HCT116 (cell line): ENCODE measurements at regions of chr17 and their contacts with region 1.

Region 1: DNA sequence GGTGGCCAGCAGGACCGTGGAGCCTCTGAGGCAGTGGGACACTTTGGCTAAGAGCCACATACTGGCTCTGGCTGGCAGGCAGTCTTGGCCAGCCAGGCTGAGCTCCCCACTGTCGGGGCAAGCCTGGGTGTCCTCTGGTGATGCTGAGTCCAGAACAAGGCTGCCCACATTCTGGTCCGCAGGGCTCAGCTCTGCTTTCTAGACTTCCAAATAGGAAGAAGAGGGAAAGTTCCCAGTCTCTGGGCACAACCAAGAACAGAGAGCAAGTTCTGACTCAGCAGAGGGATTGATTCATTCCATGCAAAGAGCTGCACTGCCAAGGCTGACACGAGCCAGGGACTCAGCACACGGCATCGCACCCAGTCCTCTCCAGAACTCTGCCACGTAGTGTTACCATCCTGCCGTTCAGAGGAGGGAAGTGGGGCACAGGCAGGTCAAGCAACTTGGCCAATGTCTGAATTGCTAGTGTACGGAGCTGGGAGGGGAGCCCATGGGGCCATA is 58.9 kb downstream of the NOS2 start:
- DNase-seq: no peak
- ATAC-seq: no peak
- H3K4me3 ChIP-seq: no peak overlapping the region
- H3K27ac ChIP-seq: no peak overlapping the region
- H3K4me1 ChIP-seq: no peaks in the 10 kb centered on the region
- H3K27me3 ChIP-seq: no peaks in the 10 kb centered on the region
- CTCF ChIP-seq: no peak
- POLR2A ChIP-seq: no peak
- RAD21 ChIP-seq: no peak

Region 2: DNA sequence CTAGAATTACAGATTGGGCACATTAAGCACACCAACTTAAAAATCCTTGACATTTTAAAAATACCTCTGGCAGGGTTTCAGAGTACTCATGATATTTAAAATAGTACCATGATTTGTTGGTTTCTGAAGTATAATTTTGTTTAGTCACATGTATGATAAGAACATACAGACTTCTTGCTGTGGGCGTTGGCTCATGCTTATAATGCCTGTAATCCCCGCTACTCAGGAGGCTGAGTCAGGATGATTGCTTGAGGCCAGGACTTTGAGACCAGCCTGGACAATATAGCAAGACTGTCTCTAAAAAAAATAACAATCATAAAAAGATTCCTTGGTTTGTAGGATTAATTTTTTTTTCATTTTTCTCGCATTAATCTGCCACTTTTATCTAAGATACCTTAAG is 19.6 kb before region 1 on chr17:
- CTCF ChIA-PET with region 1: no interaction called
- POLR2A ChIA-PET with region 1: no interaction called
- RAD21 ChIA-PET with region 1: no interaction called
- intact Hi-C with region 1: loop called (anchors 2 kb)
- DNase-seq: no peak
- ATAC-seq: no peak
- H3K4me3 ChIP-seq: no peak overlapping the region
- H3K27ac ChIP-seq: no peak overlapping the region
- H3K4me1 ChIP-seq: no peaks in the 10 kb centered on the region
- H3K27me3 ChIP-seq: no peaks in the 10 kb centered on the region
- CTCF ChIP-seq: no peak
- POLR2A ChIP-seq: no peak
- RAD21 ChIP-seq: no peak

Region 3: DNA sequence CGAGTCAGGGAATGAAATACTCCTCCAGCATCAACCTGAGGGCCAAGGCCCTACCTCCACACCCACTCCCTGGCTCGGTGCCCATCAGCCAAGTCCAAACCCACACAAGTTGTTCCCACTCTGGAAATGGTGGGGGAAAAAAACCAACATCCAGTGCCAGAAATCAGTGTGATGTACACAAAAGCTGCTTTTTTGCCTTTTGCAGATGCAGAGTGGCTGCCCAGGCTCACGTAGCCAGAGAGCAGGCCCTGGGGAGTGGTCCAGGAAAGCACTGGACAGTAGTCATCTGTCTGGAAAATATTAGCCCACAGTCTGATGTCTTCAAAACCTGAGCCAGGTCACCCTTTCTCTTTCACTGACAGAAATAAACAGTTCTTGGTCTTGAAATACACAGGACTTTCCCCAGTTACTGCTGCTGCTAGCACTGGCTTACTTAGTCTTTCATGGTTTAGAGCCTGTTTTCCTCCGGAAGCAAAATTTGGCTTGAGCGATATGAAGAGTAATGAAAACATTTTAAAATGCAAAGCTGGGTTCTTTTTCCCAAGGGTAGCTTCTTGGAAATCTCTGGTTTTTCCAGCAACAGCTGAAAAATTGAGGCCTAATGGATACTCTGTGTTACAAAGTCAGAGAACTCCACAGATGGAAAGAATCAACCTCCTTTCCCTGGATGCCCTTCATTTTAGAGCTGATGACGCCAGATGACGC is 77.1 kb after region 1 on chr17:
- CTCF ChIA-PET with region 1: no interaction called
- POLR2A ChIA-PET with region 1: no interaction called
- RAD21 ChIA-PET with region 1: no interaction called
- intact Hi-C with region 1: no loop called
- DNase-seq: no peak
- ATAC-seq: no peak
- H3K4me3 ChIP-seq: no peak overlapping the region
- H3K27ac ChIP-seq: no peak overlapping the region
- H3K4me1 ChIP-seq: peaks cover 0 to 5% of the 10 kb centered on the region in 2 experiments; a peak in 1 of 4 replicates
- H3K27me3 ChIP-seq: no peaks in the 10 kb centered on the region
- CTCF ChIP-seq: no peak
- POLR2A ChIP-seq: no peak
- RAD21 ChIP-seq: no peak